ENCODE measurements at regions of chr18 and their contacts with region 1.

Region 1: GRCh38 chr18:23452728-23453679 is at the start of gene RIOK3:
- DNase-seq: peak; percentile 97
- H3K4me3 ChIP-seq: peak within 1 kb of the TSS; percentile 64 to 100 (median 97)
- H3K27ac ChIP-seq: peak within 1 kb of the TSS; percentile 97
- H3K4me1 ChIP-seq: peaks cover 14% of the 10 kb centered on the region
- H3K27me3 ChIP-seq: no peaks in the 10 kb centered on the region
- CTCF ChIP-seq: no peak
- total RNA-seq, gene RIOK3: 94.1 to 128 TPM

Region 2: DNA sequence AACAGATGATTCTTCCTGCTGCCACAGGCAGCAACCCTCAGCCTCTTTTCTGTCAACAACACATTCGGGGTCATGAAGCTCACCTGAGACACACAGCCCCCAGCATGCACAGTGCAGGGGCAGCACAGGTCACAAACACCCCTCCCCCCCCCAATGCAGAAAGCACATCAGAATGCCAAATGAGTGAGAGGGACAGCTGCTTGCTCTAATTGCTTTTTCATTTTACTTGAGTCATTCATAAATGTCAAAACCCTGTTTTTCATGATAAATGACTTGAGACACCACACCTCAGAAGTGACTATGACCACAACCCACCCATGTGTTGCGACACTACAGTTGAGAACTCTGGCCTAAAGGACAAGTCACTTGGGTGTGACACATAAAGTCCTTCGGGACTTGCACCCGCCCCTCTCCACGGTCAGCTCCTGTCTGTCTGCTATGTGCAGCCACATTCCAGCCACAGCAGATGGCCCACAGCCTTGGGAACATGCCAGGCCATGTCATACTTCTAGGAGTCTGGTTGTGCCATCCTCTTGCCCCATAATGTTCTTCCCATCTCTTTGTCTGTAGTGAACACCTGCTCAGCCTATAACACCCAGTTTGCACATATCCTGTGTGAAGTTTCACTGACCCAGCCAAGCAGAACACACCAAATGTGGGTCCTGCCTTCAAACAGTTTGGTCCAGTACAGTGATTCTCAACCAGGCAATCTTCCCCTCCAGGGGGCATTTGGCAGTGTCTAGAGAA is 30.2 kb before region 1 on chr18:
- CTCF ChIA-PET with region 1: no interaction called
- dilution Hi-C with region 1: no loop called
- in situ Hi-C with region 1: no loop called
- intact Hi-C with region 1: loop called (anchors 1 kb)
- DNase-seq: peak; percentile 82
- H3K4me3 ChIP-seq: no peak overlapping the region
- H3K27ac ChIP-seq: no peak overlapping the region
- H3K4me1 ChIP-seq: peaks cover 12% of the 10 kb centered on the region
- H3K27me3 ChIP-seq: no peaks in the 10 kb centered on the region
- CTCF ChIP-seq: no peak

Region 3: DNA sequence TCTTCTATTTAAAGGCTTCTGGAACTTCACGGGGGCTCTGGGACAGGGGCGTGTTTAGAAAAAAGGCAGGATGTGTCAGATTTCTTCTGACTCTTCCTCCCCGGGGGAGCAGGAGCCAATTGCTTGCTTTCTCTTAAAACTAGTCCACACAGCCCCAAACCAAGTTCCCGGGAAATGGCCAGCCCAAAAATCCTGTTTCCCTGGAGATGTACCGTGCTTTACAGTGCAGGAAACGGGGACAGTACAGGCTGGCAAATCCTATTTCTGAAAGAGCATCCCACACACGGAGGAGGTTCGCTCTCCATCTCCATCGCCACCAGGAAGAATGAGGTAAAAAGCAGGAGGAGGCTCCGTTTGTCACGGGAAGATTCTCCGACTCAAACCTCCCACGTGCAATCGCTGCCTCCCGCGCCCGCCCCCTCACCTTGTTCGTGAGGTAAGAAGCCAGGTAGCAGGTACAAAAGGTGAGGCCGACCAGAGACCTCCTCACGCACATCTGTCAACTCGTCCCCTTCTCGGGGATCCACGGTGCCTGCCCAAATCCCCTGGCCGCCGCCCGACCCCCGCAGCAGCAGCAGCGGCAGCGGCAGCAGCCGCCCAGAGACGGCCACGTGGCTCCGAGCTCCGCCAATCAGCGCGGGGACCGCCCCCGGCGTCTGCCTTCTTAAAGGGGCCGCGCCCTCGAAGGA is 15.5 kb before region 1 on chr18:
- CTCF ChIA-PET with region 1: no interaction called
- dilution Hi-C with region 1: no loop called
- in situ Hi-C with region 1: no loop called
- intact Hi-C with region 1: loop called (anchors 1 kb)
- DNase-seq: peak; percentile 67
- H3K4me3 ChIP-seq: peak overlapping the region; percentile 64 to 78 (median 76)
- H3K27ac ChIP-seq: peak overlapping the region; percentile 41
- H3K4me1 ChIP-seq: peaks cover 3% of the 10 kb centered on the region
- H3K27me3 ChIP-seq: no peaks in the 10 kb centered on the region
- CTCF ChIP-seq: no peak

Region 4: GRCh38 chr18:23523429-23524220 is 70.6 kb after region 1 on chr18:
- CTCF ChIA-PET with region 1: no interaction called
- dilution Hi-C with region 1: loop called (anchors 5 kb)
- in situ Hi-C with region 1: no loop called
- intact Hi-C with region 1: no loop called
- DNase-seq: peak; percentile 23
- H3K4me3 ChIP-seq: no peak overlapping the region
- H3K27ac ChIP-seq: no peak overlapping the region
- H3K4me1 ChIP-seq: peaks cover 3% of the 10 kb centered on the region
- H3K27me3 ChIP-seq: no peaks in the 10 kb centered on the region
- CTCF ChIP-seq: no peak

Region 5: DNA sequence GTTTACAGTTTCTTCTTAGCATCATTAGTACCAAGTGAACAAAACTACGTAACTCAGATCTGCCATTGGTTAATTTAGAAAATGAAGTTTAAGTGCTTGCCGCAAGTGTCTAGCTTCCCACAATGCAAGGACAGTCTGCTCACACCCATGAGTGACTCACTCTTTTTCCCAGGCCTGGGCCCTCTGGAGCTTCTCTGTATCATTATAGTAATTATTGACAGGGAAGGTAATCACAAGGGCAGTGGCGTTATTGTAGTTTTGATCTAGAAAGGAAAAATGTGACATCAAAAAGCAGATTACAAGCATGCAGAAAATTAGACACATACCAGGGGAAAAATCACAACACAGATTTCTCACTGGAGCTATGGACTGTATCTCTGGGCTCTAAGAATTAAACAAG is 94.8 kb after region 1 on chr18:
- CTCF ChIA-PET with region 1: no interaction called
- dilution Hi-C with region 1: no loop called
- in situ Hi-C with region 1: no loop called
- intact Hi-C with region 1: no loop called
- DNase-seq: peak; percentile 57
- H3K4me3 ChIP-seq: no peak overlapping the region
- H3K27ac ChIP-seq: peak overlapping the region; percentile 33
- H3K4me1 ChIP-seq: peaks cover 24% of the 10 kb centered on the region
- H3K27me3 ChIP-seq: no peaks in the 10 kb centered on the region
- CTCF ChIP-seq: no peak

Measured in mammary epithelial cell (primary cell).